K562 (cell line): ENCODE measurements at regions of chr13 and their contacts with region 1.

Region 1: GRCh38 chr13:51583875-51584730 is at the start of gene WDFY2:
- DNase-seq: peak; percentile 92 to 97 (median 92)
- ATAC-seq: peak; percentile 91
- H3K4me3 ChIP-seq: peak within 1 kb of the TSS; percentile 82
- H3K27ac ChIP-seq: peak within 1 kb of the TSS; percentile 85
- H3K4me1 ChIP-seq: peaks cover 10 to 32% of the 10 kb centered on the region in 2 experiments; a peak in 4 of 5 replicates
- H3K27me3 ChIP-seq: no peaks in the 10 kb centered on the region
- CTCF ChIP-seq: peak in 2 of 3 experiments; percentile 18 to 37; a peak in 3 of 6 replicates
- EP300 ChIP-seq: peak; percentile 28; the same call in 1 of the 2 replicates
- POLR2A ChIP-seq: peak; percentile 64
- RAD21 ChIP-seq: no peak
- polyA plus RNA-seq, gene WDFY2: 0.66 to 1.1 TPM

Region 2: DNA sequence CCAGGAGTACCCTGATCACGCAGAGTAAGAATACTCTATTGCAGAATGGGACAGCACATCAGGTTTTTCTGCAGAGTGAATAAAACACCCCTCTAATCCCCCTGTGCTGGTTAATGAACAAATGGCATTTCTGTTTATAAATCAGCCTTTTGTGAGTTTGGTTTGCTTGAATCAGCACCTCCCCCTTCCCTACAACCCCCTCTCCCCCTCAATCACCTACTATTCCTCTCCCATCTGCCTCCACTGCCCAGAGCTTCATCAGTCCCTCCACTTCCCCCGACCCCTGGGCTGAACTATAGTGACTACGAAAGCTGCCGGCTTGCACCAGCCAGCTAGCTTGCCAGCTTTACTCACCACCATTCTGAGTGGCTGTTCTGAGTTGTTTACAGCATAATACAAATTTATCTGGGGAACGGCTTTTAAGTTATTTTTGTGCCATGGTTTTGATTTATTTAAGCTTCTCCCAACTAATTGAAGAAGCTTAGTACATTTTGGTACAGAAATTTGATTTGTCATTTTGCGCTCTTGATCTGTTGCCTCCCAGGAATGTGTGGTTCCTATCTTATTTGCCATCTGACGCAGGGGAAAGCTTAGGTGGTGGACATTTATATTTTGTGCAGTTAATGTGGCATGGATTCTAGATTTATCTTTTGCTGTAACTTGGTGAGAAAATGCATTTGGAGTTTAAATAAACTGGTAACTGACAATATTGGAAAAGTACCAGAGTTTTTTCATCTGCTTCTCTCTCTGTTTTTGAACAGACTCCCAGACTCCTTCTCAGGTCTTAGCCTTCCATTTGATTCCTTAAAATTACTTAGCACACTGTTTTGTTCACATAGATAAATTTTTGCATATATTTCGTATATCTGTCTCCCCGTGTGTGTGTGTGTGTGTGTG is 41.5 kb before region 1 on chr13:
- CTCF ChIA-PET with region 1: no interaction called
- POLR2A ChIA-PET with region 1: no interaction called
- in situ Hi-C with region 1: no loop called
- intact Hi-C with region 1: loop called (anchors 5 kb)
- DNase-seq: peak in 1 of 4 experiments; percentile 11
- ATAC-seq: peak; percentile 72
- H3K4me3 ChIP-seq: no peak overlapping the region
- H3K27ac ChIP-seq: no peak overlapping the region
- H3K4me1 ChIP-seq: peaks cover 0 to 8% of the 10 kb centered on the region in 2 experiments; a peak in 3 of 5 replicates
- H3K27me3 ChIP-seq: no peaks in the 10 kb centered on the region
- CTCF ChIP-seq: no peak
- EP300 ChIP-seq: no peak
- POLR2A ChIP-seq: no peak
- RAD21 ChIP-seq: no peak

Region 3: GRCh38 chr13:51759240-51759639 is 175.1 kb after region 1 on chr13:
- CTCF ChIA-PET with region 1: no interaction called
- POLR2A ChIA-PET with region 1: no interaction called
- in situ Hi-C with region 1: no loop called
- intact Hi-C with region 1: loop called (anchors 10 kb)
- DNase-seq: no peak
- ATAC-seq: no peak
- H3K4me3 ChIP-seq: no peak overlapping the region
- H3K27ac ChIP-seq: no peak overlapping the region
- H3K4me1 ChIP-seq: no peaks in the 10 kb centered on the region
- H3K27me3 ChIP-seq: no peaks in the 10 kb centered on the region
- CTCF ChIP-seq: no peak
- EP300 ChIP-seq: no peak
- POLR2A ChIP-seq: no peak
- RAD21 ChIP-seq: no peak